ENCODE measurements at regions of chr14 and their contacts with region 1.

Region 1: GRCh38 chr14:102524466-102525218 is 15.1 kb upstream of the ANKRD9 start:
- DNase-seq: peak; percentile 100
- H3K4me3 ChIP-seq: peak overlapping the region; percentile 53
- H3K27ac ChIP-seq: peak overlapping the region; percentile 91
- H3K4me1 ChIP-seq: peaks cover 34% of the 10 kb centered on the region
- H3K27me3 ChIP-seq: no peaks in the 10 kb centered on the region
- CTCF ChIP-seq: peak; percentile 99

Region 2: DNA sequence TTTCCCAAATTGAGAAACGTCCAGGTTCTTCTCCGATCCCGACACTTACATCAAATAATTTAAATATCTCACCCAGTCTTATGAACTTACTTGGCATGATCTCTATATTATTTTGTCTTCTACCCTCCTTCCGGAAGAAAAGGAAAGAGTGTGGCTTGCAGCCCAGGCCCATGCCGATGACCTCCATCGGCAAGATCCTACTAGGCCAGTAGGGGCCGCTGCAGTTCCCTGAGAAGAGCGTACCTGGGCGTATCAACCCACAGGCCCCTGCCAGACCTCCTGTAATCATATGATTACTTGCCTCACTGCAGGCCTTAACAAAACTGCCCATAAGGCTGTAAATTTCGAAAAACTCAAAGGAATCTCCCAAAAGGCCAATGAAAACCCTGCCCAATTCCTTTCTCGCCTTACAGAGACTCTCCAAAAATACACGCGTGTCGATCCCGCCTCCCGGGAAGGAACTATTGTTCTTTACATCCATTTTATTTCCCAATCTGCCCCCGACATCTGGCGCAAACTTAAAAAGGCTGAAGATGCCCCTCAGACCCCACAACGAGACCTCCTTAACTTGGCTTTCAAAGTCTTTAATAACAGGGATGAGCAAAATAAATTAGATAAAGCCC is 289.3 kb before region 1 on chr14:
- CTCF ChIA-PET with region 1: no interaction called
- POLR2A ChIA-PET with region 1: no interaction called
- intact Hi-C with region 1: no loop called
- DNase-seq: peak; percentile 79
- H3K4me3 ChIP-seq: peak overlapping the region; percentile 51
- H3K27ac ChIP-seq: peak overlapping the region; percentile 56
- H3K4me1 ChIP-seq: peaks cover 6% of the 10 kb centered on the region
- H3K27me3 ChIP-seq: no peaks in the 10 kb centered on the region
- CTCF ChIP-seq: peak; percentile 82

Region 3: DNA sequence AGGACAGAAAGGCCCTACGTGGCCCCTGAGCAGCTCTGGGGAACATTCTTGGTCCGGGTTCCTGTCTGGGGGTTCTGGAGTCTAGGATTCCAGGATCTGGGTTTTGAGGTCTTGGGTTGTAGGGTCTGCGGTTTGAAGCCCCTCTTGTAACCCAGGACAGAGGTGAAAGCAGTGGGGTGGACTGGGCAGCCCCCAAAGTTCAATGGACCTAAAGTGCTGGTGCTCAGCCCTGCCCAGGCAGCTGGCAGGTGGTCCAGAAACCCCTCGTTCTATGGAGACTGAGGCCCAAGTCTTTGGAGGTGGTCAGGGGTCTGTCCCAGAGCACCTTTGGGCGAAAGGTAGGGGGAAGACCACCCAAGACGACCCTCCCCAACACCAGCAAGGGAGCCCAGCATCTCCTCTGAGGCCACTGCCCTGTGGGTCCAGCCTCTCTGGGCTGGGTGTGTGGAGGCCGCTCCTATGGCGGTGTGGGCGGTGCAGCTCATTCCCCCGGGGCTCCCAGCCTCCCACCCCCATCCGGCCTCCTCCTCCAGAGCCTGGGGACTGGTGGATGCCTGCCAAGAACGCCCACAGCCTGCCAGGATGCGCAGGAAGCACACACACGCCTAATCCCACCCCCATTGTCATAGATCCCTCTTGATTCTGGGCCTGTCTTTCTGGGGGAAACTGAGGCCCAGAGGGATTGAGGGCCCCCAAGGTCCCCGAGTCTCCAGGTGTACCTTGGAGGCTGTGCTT is 15.1 kb after region 1 on chr14:
- CTCF ChIA-PET with region 1: interaction called, 15 read pairs
- POLR2A ChIA-PET with region 1: interaction called, 4 read pairs
- intact Hi-C with region 1: no loop called
- DNase-seq: peak; percentile 98
- H3K4me3 ChIP-seq: peak overlapping the region; percentile 23
- H3K27ac ChIP-seq: peak overlapping the region; percentile 96
- H3K4me1 ChIP-seq: peaks cover 56% of the 10 kb centered on the region
- H3K27me3 ChIP-seq: no peaks in the 10 kb centered on the region
- CTCF ChIP-seq: no peak

Region 4: DNA sequence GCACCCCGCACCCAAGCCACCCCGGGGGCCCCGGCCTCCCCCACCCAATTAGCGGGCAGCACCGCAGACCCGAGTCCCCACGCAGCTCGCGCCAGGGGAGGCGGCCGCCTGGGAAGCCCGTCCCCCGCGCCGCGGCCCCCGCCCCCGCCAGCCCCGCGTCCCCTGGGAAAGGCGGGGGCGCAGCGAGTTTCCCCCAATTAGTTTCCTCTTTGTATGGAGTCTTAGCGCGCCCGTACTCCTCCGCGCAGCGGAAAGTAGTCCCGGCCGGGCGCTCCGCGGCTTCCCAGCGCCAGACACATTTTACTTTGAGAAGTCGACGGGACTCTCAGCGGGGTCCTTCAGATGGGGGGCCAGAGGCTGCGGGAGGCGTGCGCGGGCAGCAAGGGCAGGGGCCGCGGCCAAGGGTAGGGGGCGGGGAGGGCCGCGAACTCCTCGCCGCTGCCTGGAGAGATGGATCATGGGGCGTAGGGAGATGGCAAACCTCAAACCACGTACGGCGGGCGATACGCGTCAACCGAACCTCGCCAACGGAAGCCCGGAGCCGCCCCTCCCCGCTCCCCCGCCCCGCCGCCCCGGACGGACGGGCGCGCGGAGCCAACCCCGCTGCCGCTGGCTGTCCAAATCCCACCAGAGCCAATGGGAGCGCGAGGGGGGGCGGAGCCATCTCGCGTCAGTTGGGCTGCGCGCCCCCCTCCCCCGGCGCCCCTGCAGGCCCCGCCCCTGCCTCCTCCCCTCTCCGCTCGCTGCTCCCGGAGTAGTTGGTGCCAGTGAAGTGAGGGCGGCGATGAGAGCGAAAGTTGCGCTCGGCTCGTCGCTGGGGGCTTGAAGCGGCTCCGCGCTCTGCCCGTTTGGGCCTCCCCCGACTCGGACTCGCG is 67.5 kb after region 1 on chr14 and contains the start of gene RCOR1:
- CTCF ChIA-PET with region 1: interaction called, 11 read pairs
- POLR2A ChIA-PET with region 1: interaction called, 4 read pairs
- intact Hi-C with region 1: loop called (anchors 2 kb)
- DNase-seq: peak; percentile 98
- H3K4me3 ChIP-seq: peak within 1 kb of the TSS; percentile 95
- H3K27ac ChIP-seq: peak within 1 kb of the TSS; percentile 99
- H3K4me1 ChIP-seq: peaks cover 11% of the 10 kb centered on the region
- H3K27me3 ChIP-seq: no peaks in the 10 kb centered on the region
- CTCF ChIP-seq: no peak
- total RNA-seq, gene RCOR1: 97.8 and 102 TPM in 2 replicates

Region 5: DNA sequence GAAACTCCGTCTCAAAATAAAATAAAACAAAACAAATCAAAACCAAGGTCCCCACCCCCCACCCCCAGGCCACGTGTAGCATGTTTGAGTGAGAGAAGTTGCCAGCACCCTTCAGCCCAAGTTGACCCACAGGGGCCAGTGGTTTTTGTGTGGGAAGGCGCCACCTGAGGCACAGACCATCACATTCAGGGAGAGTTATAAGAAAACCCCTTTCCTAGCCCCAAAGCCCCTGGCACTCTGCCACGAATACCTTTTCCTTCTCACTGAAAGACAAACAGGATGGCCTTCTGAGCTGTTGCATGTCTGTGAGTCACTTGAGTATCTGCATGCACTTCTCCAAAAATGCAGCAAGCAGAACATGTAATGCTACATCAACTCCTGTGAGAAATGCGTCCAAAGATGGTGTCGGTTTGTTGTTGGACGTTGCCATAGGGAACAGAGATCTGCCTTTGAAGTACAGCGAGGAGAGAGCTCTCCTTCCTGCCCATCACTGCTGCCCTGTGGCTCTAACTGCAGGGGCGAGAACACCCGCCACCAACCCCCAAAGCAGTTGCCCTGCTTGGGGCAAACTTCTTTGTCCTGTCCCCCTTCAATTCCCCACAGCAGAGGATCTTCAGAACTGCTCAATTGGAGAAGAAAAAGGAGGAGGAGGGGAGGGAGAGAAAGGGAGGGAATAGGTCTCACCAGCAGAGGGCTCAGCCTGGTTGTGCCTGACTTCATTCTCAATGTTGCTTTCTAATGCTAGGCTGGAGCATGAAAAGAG is 249.9 kb after region 1 on chr14:
- CTCF ChIA-PET with region 1: interaction called, 3 read pairs
- POLR2A ChIA-PET with region 1: no interaction called
- intact Hi-C with region 1: loop called (anchors 5 kb)
- DNase-seq: peak; percentile 84
- H3K4me3 ChIP-seq: no peak overlapping the region
- H3K27ac ChIP-seq: no peak overlapping the region
- H3K4me1 ChIP-seq: peaks cover 7% of the 10 kb centered on the region
- H3K27me3 ChIP-seq: no peaks in the 10 kb centered on the region
- CTCF ChIP-seq: peak; percentile 82

Region 6: DNA sequence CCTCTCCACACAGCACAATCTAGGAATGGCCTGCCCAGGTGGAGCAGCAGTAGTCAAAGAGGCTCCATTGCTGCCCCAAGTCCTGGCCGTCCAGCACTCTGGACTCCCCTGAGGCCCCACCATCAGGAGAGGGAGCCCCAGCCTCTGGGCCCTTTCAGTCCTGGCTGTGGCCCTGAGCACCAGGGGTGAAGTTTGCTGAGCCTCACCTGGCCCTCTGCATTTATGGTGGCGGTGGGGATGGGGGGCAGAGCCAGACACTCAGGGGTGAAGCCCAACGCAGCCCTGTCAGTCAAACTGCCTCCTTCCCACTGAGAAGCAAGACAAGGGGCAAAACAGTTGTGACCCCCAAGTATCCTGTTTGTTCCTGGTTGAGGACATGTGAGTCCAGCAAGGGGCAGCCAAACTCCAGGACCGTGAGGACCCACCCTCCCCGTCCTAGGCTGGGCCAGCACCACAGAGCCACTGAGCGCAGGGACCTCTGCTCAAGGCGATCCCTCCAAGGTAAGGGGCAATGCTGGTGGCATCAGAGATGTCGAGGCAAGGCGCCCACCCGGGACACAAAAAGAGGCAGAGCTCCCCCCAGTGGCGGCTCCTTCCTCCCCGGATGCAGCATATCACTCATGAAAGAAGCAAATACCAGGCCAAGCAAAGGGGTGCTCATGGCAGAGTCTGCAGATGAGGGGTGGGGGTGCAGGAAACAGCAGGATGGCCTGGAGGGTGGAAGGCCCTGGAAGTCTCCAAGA is 393.0 kb after region 1 on chr14:
- CTCF ChIA-PET with region 1: no interaction called
- POLR2A ChIA-PET with region 1: no interaction called
- intact Hi-C with region 1: loop called (anchors 10 kb)
- DNase-seq: peak; percentile 78
- H3K4me3 ChIP-seq: no peak overlapping the region
- H3K27ac ChIP-seq: no peak overlapping the region
- H3K4me1 ChIP-seq: no peaks in the 10 kb centered on the region
- H3K27me3 ChIP-seq: peaks cover 2% of the 10 kb centered on the region
- CTCF ChIP-seq: peak; percentile 88

Measured in A673 (cell line).